ENCODE measurements at regions of chr16 and their contacts with region 1.

Region 1: GRCh38 chr16:15643048-15643945 is at the start of gene MARF1:
- DNase-seq: peak; percentile 96
- H3K4me3 Mint-ChIP-seq: peak within 1 kb of the TSS; percentile 78
- H3K27ac Mint-ChIP-seq: peak within 1 kb of the TSS; percentile 97
- H3K4me1 Mint-ChIP-seq: peaks cover 20% of the 10 kb centered on the region
- H3K27me3 Mint-ChIP-seq: no peaks in the 10 kb centered on the region
- CTCF ChIP-seq: peak; percentile 29
- total RNA-seq, gene MARF1: 48.1 and 56.2 TPM in 2 replicates

Region 2: GRCh38 chr16:15529673-15530072 is 113.6 kb before region 1 on chr16:
- CTCF ChIA-PET with region 1: no interaction called
- POLR2A ChIA-PET with region 1: no interaction called
- intact Hi-C with region 1: no loop called
- DNase-seq: no peak
- H3K4me3 Mint-ChIP-seq: no peak overlapping the region
- H3K27ac Mint-ChIP-seq: no peak overlapping the region
- H3K4me1 Mint-ChIP-seq: no peaks in the 10 kb centered on the region
- H3K27me3 Mint-ChIP-seq: no peaks in the 10 kb centered on the region
- CTCF ChIP-seq: no peak

Region 3: GRCh38 chr16:15572329-15573001 is 70.8 kb before region 1 on chr16:
- CTCF ChIA-PET with region 1: interaction called, 5 read pairs
- POLR2A ChIA-PET with region 1: interaction called, 12 read pairs
- intact Hi-C with region 1: no loop called
- DNase-seq: peak; percentile 68
- H3K4me3 Mint-ChIP-seq: no peak overlapping the region
- H3K27ac Mint-ChIP-seq: no peak overlapping the region
- H3K4me1 Mint-ChIP-seq: peaks cover 29% of the 10 kb centered on the region
- H3K27me3 Mint-ChIP-seq: no peaks in the 10 kb centered on the region
- CTCF ChIP-seq: no peak

Region 4: DNA sequence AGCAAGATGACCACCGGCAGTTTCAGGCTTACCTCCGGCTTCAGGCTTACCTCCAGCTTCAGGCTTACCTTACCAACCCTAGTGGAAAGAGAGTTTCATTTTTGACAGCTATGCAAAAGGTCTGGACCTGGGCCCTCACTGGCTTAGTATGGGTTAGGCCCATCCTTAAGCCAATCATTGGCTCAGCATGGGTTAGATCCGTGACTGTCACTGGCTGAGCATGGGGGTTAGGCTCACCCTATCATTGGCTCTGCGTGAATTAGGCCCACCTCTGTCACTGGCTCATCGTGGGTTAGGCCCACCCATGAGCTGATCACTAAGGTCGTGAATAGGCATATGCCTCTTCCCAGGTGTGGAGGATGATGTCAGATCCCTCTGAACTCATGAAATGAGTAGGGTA is 14.9 kb after region 1 on chr16:
- CTCF ChIA-PET with region 1: interaction called, 14 read pairs
- POLR2A ChIA-PET with region 1: interaction called, 139 read pairs
- intact Hi-C with region 1: no loop called
- DNase-seq: no peak
- H3K4me3 Mint-ChIP-seq: no peak overlapping the region
- H3K27ac Mint-ChIP-seq: no peak overlapping the region
- H3K4me1 Mint-ChIP-seq: peaks cover 11% of the 10 kb centered on the region
- H3K27me3 Mint-ChIP-seq: no peaks in the 10 kb centered on the region
- CTCF ChIP-seq: no peak

Region 5: DNA sequence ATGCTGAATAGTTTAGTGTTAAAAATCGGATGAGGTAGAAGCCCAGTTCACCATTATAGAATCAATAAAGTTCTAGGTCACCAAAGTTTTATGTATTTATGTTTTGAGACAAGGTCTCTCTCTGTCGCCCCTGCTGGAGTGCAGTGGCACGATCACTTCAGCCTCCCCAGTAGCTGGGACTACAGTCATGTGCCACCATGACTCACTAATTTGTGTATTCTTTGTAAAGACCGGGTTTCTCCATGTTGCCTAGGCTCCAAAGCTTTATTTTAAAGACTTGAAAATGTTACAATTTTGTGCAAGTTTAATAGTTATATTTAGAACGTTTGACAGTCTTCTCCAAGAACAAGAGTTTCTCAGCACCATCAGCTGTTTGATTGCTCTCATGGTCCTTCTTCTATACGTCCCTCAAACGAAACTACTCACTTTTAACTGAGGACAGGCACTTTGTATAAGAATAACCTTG is 38.8 kb after region 1 on chr16:
- CTCF ChIA-PET with region 1: interaction called, 10 read pairs
- POLR2A ChIA-PET with region 1: interaction called, 80 read pairs
- intact Hi-C with region 1: loop called (anchors 1 kb)
- DNase-seq: peak; percentile 82
- H3K4me3 Mint-ChIP-seq: no peak overlapping the region
- H3K27ac Mint-ChIP-seq: no peak overlapping the region
- H3K4me1 Mint-ChIP-seq: no peaks in the 10 kb centered on the region
- H3K27me3 Mint-ChIP-seq: no peaks in the 10 kb centered on the region
- CTCF ChIP-seq: peak; percentile 44

Region 6: GRCh38 chr16:15704545-15704987 is 61.3 kb after region 1 on chr16:
- CTCF ChIA-PET with region 1: interaction called, 5 read pairs
- POLR2A ChIA-PET with region 1: interaction called, 19 read pairs
- intact Hi-C with region 1: loop called (anchors 1 kb)
- DNase-seq: peak; percentile 73
- H3K4me3 Mint-ChIP-seq: no peak overlapping the region
- H3K27ac Mint-ChIP-seq: no peak overlapping the region
- H3K4me1 Mint-ChIP-seq: no peaks in the 10 kb centered on the region
- H3K27me3 Mint-ChIP-seq: no peaks in the 10 kb centered on the region
- CTCF ChIP-seq: peak; percentile 62

Region 7: GRCh38 chr16:15777533-15778203 is 134.4 kb after region 1 on chr16:
- CTCF ChIA-PET with region 1: no interaction called
- POLR2A ChIA-PET with region 1: no interaction called
- intact Hi-C with region 1: no loop called
- DNase-seq: peak; percentile 49
- H3K4me3 Mint-ChIP-seq: no peak overlapping the region
- H3K27ac Mint-ChIP-seq: no peak overlapping the region
- H3K4me1 Mint-ChIP-seq: no peaks in the 10 kb centered on the region
- H3K27me3 Mint-ChIP-seq: peaks cover 33% of the 10 kb centered on the region
- CTCF ChIP-seq: peak; percentile 38

Region 8: GRCh38 chr16:15983898-15984297 is 340.6 kb after region 1 on chr16:
- CTCF ChIA-PET with region 1: no interaction called
- POLR2A ChIA-PET with region 1: no interaction called
- intact Hi-C with region 1: no loop called
- DNase-seq: no peak
- H3K4me3 Mint-ChIP-seq: no peak overlapping the region
- H3K27ac Mint-ChIP-seq: no peak overlapping the region
- H3K4me1 Mint-ChIP-seq: peaks cover 16% of the 10 kb centered on the region
- H3K27me3 Mint-ChIP-seq: no peaks in the 10 kb centered on the region
- CTCF ChIP-seq: no peak

Measured in MCF 10A (cell line).